ENCODE measurements at regions of chr6 and their contacts with region 1.

Region 1: GRCh38 chr6:16238057-16238962 is at the start of gene GMPR:
- DNase-seq: peak; percentile 91 to 95
- ATAC-seq: peak; percentile 86
- H3K4me3 ChIP-seq: peak within 1 kb of the TSS; percentile 43 to 79
- H3K27ac ChIP-seq: peak within 1 kb of the TSS; percentile 31 to 89
- H3K4me1 ChIP-seq: peaks cover 0 to 4% of the 10 kb centered on the region in 2 donors
- H3K27me3 ChIP-seq: no peaks in the 10 kb centered on the region
- total RNA-seq, gene GMPR: 17.3 to 23.8 TPM

Region 2: DNA sequence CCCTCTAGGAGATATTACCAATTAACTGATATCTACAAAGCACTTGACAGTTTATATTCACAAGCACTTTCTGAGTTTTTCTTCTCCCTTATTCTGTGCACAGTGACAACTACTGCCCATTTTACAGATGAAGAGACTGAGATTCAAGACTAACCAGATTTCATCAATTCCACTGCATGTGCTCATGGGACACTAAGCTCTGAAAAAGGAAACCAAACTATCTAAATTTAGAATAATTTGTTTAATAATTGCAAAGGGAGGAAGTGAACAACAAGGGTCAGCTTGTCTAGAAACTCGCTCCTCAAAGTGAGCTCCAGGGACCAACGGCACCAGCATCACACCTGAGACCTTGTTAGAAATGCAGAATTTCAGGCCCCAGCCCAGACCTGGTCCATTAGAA is 160.2 kb before region 1 on chr6:
- intact Hi-C with region 1: no loop called
- DNase-seq: no peak
- ATAC-seq: no peak
- H3K4me3 ChIP-seq: no peak overlapping the region
- H3K27ac ChIP-seq: no peak overlapping the region
- H3K4me1 ChIP-seq: no peaks in the 10 kb centered on the region
- H3K27me3 ChIP-seq: no peaks in the 10 kb centered on the region

Region 3: GRCh38 chr6:16216501-16217155 is 21.7 kb before region 1 on chr6:
- intact Hi-C with region 1: loop called in 1 of 2 experiments (anchors 2 kb)
- DNase-seq: no peak
- ATAC-seq: peak; percentile 62
- H3K4me3 ChIP-seq: no peak overlapping the region
- H3K27ac ChIP-seq: peak overlapping the region in 1 of 2 donors; percentile 66
- H3K4me1 ChIP-seq: no peaks in the 10 kb centered on the region
- H3K27me3 ChIP-seq: no peaks in the 10 kb centered on the region

Region 4: DNA sequence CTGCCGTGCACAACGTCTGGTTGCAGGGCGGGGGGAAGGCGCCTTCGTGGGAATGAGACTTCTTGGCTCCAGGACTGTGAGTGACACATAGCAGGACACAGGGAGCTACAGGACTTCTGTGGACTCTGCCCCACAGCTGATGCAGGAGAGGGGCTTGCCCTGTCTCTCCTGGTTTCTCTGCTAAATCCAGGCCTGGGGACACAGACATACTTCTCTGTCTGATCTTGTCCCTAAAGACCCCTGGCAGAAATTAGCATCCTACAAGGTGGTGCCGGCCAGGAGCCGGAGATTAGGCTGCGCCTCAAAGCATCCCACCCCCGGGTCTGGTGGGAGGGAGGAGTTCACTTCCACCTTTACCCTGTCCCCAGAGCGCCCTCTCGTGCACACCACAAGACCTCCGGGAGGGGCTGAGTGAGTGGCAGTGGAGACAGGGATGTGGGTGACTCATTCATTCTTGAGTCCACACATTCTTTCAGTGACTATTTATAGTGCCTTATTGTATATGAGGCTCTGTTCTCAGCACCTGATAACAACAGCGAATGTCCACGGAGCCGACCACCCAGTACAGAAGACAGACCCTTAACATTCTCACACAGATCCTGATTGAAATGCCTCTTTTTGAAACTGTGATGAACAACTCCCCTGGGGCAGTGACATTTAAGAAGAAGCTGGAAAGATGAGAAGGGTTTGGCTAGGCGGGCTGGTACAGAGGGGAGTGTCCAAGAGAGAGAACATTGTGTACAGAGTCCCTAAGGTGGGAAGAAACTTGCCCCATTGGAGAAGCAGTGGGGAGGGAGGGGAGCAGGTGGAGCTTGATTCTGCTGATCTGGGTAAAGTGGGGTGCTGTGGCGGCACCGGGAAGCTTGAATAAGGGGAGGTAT is 39.0 kb after region 1 on chr6:
- intact Hi-C with region 1: loop called (anchors 5 kb)
- DNase-seq: peak; percentile 89 to 93
- ATAC-seq: peak; percentile 88
- H3K4me3 ChIP-seq: no peak overlapping the region
- H3K27ac ChIP-seq: peak overlapping the region in 1 of 2 donors; percentile 39
- H3K4me1 ChIP-seq: no peaks in the 10 kb centered on the region
- H3K27me3 ChIP-seq: no peaks in the 10 kb centered on the region

Region 5: DNA sequence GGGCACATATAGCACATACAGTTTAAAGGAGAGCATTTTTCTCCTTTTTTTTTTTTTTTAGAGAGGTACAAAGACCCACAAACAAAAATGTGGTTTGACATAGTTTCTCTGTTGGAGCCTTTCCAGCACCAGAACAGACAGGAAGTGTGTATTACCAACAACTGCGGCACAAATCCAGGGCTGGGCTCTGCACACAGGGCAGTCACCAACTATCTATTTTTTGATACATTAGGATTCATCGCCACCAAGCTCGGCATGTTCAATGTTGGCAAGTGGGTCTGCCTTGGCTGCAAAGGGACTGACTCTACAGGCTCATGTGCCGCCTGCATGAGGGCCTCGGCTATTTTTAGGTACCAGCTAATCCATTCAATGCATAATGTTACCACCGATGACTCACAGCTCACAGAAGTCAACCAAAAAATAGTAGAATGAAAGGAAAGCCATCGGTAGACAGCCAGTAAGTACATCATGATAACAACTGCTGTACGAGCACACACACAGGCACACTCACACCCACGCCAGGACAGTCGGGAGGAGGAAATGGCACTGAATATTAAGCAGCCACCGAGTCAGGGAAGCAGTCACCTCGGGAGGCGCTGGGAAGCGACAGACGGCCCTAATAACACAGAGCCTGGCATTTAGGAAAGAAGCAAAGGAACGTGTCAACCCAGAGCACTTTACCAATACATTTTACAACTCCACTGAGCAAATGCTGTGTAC is 81.7 kb after region 1 on chr6:
- intact Hi-C with region 1: loop called (anchors 5 to 10 kb)
- DNase-seq: peak; percentile 86 to 88
- ATAC-seq: peak; percentile 90
- H3K4me3 ChIP-seq: peak overlapping the region in 1 of 2 donors; percentile 4
- H3K27ac ChIP-seq: peak overlapping the region; percentile 98
- H3K4me1 ChIP-seq: peaks cover 0 to 7% of the 10 kb centered on the region in 2 donors
- H3K27me3 ChIP-seq: no peaks in the 10 kb centered on the region

Measured in aorta (tissue), 5 donors.